ENCODE measurements at regions of chr12 and their contacts with region 1.

Region 1: GRCh38 chr12:78863482-78864402 is 832 bp upstream of the SYT1 start:
- DNase-seq: peak; percentile 39
- ATAC-seq: peak; percentile 63
- H3K4me3 ChIP-seq: peak overlapping the region; percentile 57
- H3K27ac ChIP-seq: peak overlapping the region; percentile 5; the same call in 1 of the 2 replicates
- H3K4me1 ChIP-seq: no peaks in the 10 kb centered on the region
- H3K27me3 ChIP-seq: no peaks in the 10 kb centered on the region; the same call in 1 of the 2 replicates
- CTCF ChIP-seq: no peak
- POLR2A ChIP-seq: no peak
- RAD21 ChIP-seq: no peak

Region 2: DNA sequence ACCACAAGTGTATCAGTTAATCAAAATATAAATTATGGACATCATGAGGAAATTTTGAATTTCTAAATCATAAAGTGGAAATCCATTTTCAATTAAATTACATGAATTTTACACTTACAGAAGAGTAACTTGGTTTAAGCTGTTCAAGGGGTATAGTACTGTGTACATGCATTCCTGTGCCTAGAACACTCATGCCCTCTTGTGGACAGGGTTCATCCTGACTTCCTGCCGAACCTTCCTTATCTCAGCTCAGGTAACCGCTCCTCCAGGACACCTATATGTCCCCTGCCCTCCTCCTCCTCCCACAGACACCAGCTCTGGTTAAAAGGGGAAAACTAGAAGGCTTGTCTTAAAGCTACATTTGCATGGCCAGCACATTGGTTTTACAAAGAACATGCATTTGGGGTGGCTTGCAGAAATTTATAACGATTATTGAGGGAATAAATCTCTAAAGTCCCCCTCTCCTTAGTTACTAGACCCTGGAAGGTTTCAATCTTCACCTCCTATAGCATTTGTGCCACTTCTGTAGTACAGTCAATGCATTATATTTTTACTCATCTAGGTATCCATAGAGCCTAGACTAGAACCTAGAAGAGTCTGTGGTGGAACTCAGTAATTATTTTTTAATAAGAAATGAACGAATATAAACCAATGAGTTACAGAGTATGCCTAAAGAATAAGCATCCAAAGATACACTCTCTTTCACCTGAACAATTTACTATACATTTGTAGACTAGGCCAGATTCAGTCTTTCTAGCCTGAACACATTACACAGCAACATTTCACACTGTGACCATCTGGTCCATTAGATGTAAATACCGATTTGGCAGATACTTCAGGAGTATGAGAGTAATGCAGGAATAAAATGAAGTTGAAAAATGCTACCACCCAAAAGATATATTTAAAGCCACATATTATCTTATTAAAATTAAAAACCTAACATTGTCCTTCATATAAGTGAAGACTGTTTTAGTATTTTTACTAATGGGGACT is 481.4 kb after region 1 on chr12:
- CTCF ChIA-PET with region 1: no interaction called
- POLR2A ChIA-PET with region 1: no interaction called
- dilution Hi-C with region 1: no loop called
- in situ Hi-C with region 1: no loop called
- intact Hi-C with region 1: loop called (anchors 10 kb)
- DNase-seq: peak; percentile 50
- ATAC-seq: peak; percentile 86
- H3K4me3 ChIP-seq: no peak overlapping the region
- H3K27ac ChIP-seq: no peak overlapping the region
- H3K4me1 ChIP-seq: no peaks in the 10 kb centered on the region
- H3K27me3 ChIP-seq: no peaks in the 10 kb centered on the region; the same call in 1 of the 2 replicates
- CTCF ChIP-seq: peak; percentile 57
- POLR2A ChIP-seq: no peak
- RAD21 ChIP-seq: peak; percentile 78